ENCODE measurements at regions of chrX and their contacts with region 1.

Region 1: DNA sequence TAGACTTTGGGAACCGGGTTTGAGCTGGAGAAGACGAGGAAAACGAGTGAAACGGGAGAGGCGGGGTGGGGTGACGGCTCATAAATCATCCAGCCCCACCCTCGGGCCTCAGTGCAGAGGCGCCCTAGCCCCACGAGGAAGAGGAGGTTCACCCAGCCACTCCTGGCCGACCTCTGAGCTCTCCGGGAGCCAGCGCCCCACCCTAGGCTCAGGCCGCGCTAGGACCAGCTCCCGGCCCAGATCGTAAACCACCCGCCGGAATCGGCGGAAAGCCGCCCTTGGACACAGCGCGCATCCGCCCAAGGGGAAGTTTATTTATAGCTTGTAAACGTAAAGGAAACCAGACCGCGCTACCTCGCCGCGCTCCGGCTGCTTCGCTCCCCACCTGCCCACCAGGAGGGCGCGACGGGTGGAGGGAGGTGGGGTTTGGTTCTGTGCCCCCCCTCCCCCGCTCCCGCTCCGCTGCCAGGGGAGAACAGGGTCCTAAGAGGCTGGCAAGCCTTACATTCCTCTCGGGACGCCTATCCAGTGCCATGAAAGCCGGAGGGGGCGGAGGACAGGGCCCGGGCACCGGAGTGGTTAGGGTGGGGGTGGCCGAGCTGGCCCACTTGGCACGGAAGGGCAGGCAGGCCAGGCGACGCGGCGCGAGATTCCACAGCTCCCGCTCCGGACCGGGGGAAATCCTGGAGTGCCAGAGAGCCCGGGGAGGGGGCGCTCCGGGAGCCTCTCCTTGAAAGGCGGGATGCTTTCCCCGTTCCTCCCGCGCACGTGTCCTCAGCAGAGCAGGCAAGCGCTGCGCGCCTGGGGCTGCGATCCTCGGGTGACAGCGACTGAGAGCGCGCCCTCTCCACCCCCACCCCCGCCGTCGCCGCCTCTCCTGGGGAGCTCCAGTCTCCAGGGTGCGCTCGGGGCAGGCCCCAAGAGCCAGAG is 84.2 kb downstream of the BCOR start:
- DNase-seq: peak; percentile 65
- H3K4me3 ChIP-seq: peak overlapping the region; percentile 53
- H3K27ac ChIP-seq: peak overlapping the region; percentile 71
- H3K4me1 ChIP-seq: peaks cover 22% of the 10 kb centered on the region
- H3K27me3 ChIP-seq: no peaks in the 10 kb centered on the region
- CTCF ChIP-seq: no peak

Region 2: GRCh38 chrX:39726771-39727170 is 286.8 kb before region 1 on chrX:
- CTCF ChIA-PET with region 1: no interaction called
- POLR2A ChIA-PET with region 1: no interaction called
- intact Hi-C with region 1: loop called (anchors 5 kb)
- DNase-seq: peak; percentile 87
- H3K4me3 ChIP-seq: no peak overlapping the region
- H3K27ac ChIP-seq: no peak overlapping the region
- H3K4me1 ChIP-seq: peaks cover 27% of the 10 kb centered on the region
- H3K27me3 ChIP-seq: no peaks in the 10 kb centered on the region
- CTCF ChIP-seq: no peak

Region 3: DNA sequence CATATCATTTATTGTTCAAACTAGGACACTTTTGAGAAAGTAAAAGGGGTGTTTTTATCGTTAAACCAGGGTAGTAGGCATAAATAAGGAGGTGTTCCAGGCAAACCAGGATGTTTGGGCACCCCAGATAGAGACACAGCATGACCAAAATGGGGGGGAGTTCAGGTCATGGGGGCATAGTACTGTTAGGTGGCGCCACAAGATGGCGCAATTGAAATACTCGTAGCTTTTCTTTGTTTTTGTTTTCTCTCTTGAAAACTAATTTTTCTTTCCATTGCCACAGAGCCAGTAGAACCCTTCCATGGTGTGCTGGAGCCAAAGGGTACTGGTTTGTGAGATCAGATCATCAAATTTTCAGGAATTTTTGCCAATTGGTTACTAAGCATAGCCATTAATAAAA is 199.1 kb before region 1 on chrX:
- CTCF ChIA-PET with region 1: no interaction called
- POLR2A ChIA-PET with region 1: no interaction called
- intact Hi-C with region 1: loop called (anchors 5 kb)
- DNase-seq: peak; percentile 35
- H3K4me3 ChIP-seq: no peak overlapping the region
- H3K27ac ChIP-seq: no peak overlapping the region
- H3K4me1 ChIP-seq: peaks cover 16% of the 10 kb centered on the region
- H3K27me3 ChIP-seq: no peaks in the 10 kb centered on the region
- CTCF ChIP-seq: peak; percentile 61

Region 4: DNA sequence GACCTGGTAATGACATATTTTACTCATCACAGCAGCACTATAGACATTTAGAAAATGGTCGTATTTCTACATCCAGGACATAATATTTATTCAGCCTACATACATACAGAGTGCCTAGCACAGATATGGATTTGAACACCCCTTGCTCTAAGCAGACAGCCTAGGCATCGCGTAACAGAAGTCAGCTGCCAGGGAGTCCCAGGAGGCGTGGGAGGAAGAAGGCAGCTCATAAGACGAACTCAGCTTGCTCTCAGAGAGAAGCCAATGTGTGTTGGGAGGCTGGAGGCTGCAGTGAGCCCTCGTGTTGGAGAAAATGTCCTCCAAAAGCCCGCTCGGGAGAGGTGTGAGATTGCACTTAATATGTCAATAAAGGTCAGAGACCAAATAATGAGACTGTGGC is 47.4 kb before region 1 on chrX:
- CTCF ChIA-PET with region 1: no interaction called
- POLR2A ChIA-PET with region 1: interaction called, 11 read pairs
- intact Hi-C with region 1: no loop called
- DNase-seq: no peak
- H3K4me3 ChIP-seq: no peak overlapping the region
- H3K27ac ChIP-seq: no peak overlapping the region
- H3K4me1 ChIP-seq: no peaks in the 10 kb centered on the region
- H3K27me3 ChIP-seq: no peaks in the 10 kb centered on the region
- CTCF ChIP-seq: no peak

Region 5: GRCh38 chrX:40097497-40098263 is 84.1 kb after region 1 on chrX and contains the start of gene BCOR:
- CTCF ChIA-PET with region 1: interaction called, 8 read pairs
- POLR2A ChIA-PET with region 1: no interaction called
- intact Hi-C with region 1: loop called (anchors 5 kb)
- DNase-seq: peak; percentile 81
- H3K4me3 ChIP-seq: peak within 1 kb of the TSS; percentile 64
- H3K27ac ChIP-seq: peak within 1 kb of the TSS; percentile 69
- H3K4me1 ChIP-seq: peaks cover 31% of the 10 kb centered on the region
- H3K27me3 ChIP-seq: no peaks in the 10 kb centered on the region
- CTCF ChIP-seq: no peak
- total RNA-seq, gene BCOR: 58.8 and 59.0 TPM in 2 replicates

Region 6: DNA sequence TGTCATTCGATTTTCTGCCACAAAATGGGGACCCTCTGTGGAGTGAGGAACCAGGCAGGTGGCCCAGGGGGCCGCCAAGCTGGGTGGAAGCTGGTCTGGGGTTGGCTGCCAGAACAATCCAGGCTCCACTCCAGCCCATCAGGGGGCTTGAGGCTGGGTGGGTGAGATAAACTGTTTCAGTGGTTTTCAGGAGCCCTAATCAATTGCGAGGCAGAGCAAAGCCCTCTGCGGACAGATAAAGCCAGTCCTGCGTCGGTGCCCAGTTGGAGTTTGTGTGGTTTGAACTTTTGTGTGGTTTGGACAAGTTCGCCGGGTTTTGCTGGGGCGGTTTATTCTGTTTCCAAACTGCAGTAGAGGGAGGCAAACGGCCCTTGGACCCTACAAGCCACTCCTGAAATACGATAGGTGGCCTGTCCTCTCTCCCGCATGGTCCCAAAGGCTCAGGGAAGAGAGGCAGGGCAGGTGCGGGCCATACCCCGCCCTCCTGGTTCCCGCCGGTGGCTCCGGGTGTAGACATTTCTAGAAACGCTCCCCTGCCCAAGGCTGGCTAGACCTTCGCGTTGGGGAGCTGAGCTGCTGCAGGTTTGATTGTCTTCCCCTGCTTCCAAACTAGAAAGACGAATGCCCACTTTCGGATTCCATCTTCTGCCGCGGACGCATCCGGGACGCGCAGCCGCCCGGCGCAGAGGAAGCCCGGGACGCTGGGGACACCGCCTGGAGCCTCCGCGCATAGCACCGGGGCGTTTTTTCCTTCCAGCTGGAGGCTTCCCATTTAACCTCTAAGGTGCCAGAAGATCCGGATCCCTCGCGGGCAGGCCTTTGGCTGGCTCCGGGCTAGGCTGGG is 253.2 kb after region 1 on chrX:
- CTCF ChIA-PET with region 1: no interaction called
- POLR2A ChIA-PET with region 1: no interaction called
- intact Hi-C with region 1: loop called (anchors 2 kb)
- DNase-seq: peak; percentile 79
- H3K4me3 ChIP-seq: peak overlapping the region; percentile 48
- H3K27ac ChIP-seq: peak overlapping the region; percentile 65
- H3K4me1 ChIP-seq: peaks cover 17% of the 10 kb centered on the region
- H3K27me3 ChIP-seq: no peaks in the 10 kb centered on the region
- CTCF ChIP-seq: peak; percentile 70

Region 7: DNA sequence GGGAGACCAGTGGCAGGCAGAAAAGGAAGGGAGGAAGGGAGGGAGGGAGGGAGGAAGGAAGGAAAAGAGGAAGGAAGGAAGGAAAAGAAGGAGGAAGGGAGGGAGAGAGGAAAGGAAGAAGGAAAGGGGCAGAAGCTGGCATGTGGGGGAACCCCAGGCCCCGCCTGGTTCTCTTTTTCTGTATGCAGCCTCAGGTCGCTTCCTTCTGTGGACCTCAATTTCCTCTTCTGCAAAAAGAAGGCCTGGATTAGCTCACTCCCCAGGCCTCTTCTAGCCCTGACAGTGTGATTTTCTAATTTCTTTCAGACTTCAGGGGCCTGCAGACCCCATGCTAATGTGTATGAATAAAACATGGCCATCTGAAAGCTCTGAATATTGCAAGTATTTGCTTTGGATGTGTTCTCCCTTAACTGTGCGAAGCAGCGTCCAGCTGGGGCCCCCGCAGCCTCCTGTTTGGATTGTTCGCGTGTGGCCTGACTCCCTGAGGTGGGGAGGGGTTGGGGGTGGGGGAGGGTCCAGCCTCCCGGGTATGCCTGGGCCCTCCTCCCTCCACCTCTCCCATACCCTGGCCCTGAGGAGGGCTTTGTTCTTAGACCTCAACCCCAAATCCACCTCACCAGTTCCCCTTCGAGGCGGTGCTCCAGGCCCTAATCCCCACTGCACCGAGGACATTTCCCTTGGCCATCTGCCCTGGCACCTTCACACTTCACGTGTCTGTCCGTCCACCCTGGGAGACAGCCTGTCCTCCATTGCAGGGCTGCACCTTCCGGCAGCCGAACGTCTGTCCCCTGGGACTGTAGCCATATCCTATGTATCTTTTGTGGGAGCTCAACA is 367.3 kb after region 1 on chrX:
- CTCF ChIA-PET with region 1: interaction called, 13 read pairs
- POLR2A ChIA-PET with region 1: no interaction called
- intact Hi-C with region 1: no loop called
- DNase-seq: peak; percentile 3
- H3K4me3 ChIP-seq: no peak overlapping the region
- H3K27ac ChIP-seq: no peak overlapping the region
- H3K4me1 ChIP-seq: no peaks in the 10 kb centered on the region
- H3K27me3 ChIP-seq: no peaks in the 10 kb centered on the region
- CTCF ChIP-seq: no peak